SK-N-SH (cell line): ENCODE measurements at regions of chr19 and their contacts with region 1.

Region 1: DNA sequence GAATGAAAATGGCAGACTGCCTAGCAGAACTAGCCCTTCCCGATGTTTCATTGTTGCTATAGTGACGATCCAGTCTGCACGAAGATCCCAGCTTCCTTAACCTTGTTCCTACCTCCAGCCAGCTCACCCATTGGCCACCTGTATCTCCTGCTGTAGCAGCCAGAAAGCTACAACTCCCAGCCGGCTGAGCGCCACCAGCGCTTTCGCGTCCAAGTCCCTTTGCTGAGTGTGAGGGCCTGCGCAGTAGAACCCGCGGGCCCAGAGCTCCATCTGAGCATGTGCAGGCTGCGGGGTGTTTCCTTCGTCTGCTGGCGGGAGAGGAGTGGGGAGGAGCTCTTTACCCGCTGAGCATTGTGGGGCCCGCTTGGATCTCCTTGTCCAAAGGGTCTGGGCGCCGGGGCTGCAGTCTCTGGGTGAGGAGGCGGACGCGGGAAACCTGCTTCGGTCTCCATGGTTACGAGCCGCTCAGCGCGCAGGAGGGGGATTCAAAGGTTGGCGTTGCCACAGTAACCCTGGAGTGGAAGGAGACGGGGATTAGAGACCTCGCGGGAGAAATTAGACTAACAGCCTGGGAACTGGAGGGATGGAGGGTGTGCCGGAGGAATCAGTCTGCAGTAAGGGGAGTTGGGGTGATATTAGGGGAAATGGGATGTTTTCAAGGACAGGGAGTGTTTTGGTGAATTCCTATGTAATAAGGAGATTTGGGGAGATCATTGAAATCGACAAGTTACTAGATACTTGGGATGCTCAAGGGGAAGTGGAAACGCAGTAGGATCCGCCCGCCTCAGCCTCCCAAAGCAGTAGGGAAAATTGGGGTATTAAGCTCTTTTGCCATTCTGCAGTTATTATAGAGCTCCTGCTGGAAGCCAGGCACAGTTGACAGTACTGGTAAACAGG is 33.5 kb downstream of the ZSWIM9 start:
- DNase-seq: peak; percentile 93
- H3K4me3 ChIP-seq: peak overlapping the region; percentile 66 to 87
- H3K27ac ChIP-seq: peak overlapping the region; percentile 49 to 85
- H3K4me1 ChIP-seq: peaks cover 0 to 2% of the 10 kb centered on the region in 2 experiments; a peak in 2 of 4 replicates
- H3K27me3 ChIP-seq: no peaks in the 10 kb centered on the region
- CTCF ChIP-seq: no peak
- EP300 ChIP-seq: no peak
- RAD21 ChIP-seq: no peak

Region 2: DNA sequence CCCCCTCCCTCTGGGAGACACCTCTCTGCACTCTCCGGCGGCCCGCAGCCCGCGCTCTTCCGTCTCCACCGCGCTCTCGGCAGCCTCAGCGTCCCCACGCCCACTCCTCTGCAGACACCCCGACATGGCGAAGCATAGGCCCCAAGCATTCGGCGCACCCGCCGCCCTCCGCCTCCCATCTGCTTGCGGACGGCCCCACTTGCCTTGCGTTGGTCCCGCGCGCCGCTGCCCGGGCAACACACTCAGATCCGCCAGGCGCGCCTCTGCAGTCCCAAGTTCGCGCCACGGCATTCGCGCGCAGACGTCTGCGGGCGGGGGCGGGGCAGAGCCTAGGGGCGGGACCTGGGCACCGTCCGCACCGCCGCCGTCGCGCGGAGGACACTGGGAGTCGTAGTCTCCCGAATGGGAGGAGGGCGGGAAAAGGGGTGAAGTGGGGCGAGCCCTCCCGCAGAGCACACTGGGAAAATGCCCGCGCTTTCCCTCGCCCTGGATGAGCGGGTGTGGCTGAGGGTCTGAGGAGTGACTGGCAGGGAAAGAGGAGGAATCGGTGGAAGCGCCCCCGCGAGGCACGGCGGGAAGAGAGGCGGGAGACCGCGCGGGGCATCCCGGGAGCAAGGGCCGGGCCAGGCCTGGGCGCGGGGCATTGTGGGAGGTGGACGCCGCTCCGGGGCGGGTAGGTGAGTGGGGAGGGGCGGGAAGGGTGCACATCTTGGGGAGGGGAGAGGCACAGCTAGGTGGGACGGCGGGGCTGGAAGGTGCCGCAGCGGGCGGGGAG is 33.8 kb before region 1 on chr19 and contains the starts of genes LIG1 and ZSWIM9:
- CTCF ChIA-PET with region 1: interaction called, 5 read pairs
- POLR2A ChIA-PET with region 1: interaction called, 11 read pairs
- DNase-seq: peak; percentile 98
- H3K4me3 ChIP-seq: peak within 1 kb of the TSS; percentile 73 to 100
- H3K27ac ChIP-seq: peak within 1 kb of the TSS; percentile 83 to 97
- H3K4me1 ChIP-seq: peaks cover 10 to 12% of the 10 kb centered on the region in 2 experiments; a peak in 1 of 4 replicates
- H3K27me3 ChIP-seq: no peaks in the 10 kb centered on the region
- CTCF ChIP-seq: no peak
- EP300 ChIP-seq: no peak
- RAD21 ChIP-seq: no peak
- polyA plus RNA-seq, gene LIG1: 39.6 and 53.0 TPM in 2 replicates
- polyA plus RNA-seq, gene ZSWIM9: 1.3 and 2.2 TPM in 2 replicates

Region 3: GRCh38 chr19:48255376-48256303 is 51.7 kb after region 1 on chr19 and contains the start of gene CARD8:
- CTCF ChIA-PET with region 1: interaction called, 16 read pairs
- POLR2A ChIA-PET with region 1: interaction called, 10 read pairs
- DNase-seq: peak; percentile 73
- H3K4me3 ChIP-seq: peak within 1 kb of the TSS; percentile 76 to 84
- H3K27ac ChIP-seq: peak within 1 kb of the TSS; percentile 93 to 95
- H3K4me1 ChIP-seq: peaks cover 0 to 14% of the 10 kb centered on the region in 2 experiments; a peak in 3 of 4 replicates
- H3K27me3 ChIP-seq: no peaks in the 10 kb centered on the region
- CTCF ChIP-seq: no peak
- EP300 ChIP-seq: no peak; a peak in 1 of 4 replicates
- RAD21 ChIP-seq: no peak
- polyA plus RNA-seq, gene CARD8: 16.4 and 21.7 TPM in 2 replicates